Left cardiac atrium (tissue), 4 donors: ENCODE measurements at regions of chr15 and their contacts with region 1.

Region 1: DNA sequence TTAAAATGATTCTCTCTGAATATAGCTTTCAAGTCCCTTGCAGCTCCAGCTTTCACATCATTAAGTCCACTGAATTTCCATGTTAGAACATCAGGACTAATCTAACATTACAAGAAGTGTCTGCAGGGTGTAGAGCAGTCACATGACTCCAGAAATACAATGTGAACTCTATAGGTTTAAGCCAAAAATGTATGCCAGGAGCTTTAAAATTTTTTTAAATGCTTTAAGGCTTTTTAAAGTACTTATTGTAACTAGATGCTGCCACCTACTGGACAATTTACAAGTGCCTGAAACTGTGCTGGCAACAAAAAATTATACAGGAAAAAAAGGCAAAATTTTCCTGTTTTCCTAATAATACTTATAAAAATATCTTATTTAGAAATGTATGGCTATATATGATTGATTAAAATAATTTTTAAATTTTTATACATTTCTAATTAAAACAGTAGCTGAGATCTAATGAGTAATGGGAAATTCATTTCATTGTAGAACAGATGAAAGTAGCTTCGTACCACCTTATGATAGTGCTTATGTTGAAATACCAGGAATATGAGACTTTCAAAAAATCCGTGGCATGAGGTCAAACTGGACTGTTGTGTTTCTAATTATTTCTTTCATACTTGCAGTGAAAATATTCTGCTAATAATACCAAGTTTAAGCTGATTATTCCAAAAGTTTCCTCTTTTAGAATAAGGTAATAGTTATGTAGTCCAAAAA is 25.7 kb downstream of the FSIP1 start:
- DNase-seq: no peak
- ATAC-seq: no peak

Region 2: GRCh38 chr15:38707802-38708671 is 1048.9 kb before region 1 on chr15:
- intact Hi-C with region 1: loop called in 1 of 2 experiments (anchors 5 kb)
- DNase-seq: no peak
- ATAC-seq: peak; percentile 74 to 86

Region 3: DNA sequence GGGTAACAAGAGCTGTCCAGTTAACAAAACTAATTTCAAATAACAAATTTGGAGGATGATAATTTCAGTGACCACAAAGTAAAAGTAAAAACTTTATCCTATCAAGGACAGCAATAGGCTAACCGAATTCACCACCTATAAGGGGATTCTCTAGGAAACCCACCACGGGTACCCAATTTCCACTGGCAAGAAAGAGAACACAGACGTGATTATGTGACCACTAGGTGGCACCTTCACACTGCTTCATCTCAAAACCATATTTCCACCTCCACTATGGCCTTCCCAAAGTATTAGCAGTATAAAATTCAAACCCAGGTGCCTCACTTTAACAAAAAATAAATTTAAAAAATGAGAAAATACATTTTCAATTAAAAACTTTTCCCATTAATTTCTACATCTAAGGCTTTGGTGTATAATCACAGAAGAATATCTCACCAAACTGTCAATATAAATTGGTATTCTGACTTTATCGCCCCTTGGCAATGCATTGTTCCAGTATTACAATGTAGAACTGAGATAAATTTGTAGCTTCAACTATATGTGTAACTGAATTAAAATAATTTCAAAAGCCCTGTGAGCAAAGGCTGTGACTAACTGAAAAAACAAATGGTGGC is 70.9 kb before region 1 on chr15:
- intact Hi-C with region 1: loop called (anchors 2 to 10 kb)
- DNase-seq: no peak
- ATAC-seq: peak; percentile 59 to 63